ENCODE measurements at regions of chr17 and their contacts with region 1.

Region 1: GRCh38 chr17:21511363-21512198 is 135.4 kb downstream of the KCNJ12 start:
- DNase-seq: peak; percentile 71
- ATAC-seq: peak; percentile 78
- H3K4me3 Mint-ChIP-seq: peak overlapping the region; percentile 66
- H3K27ac Mint-ChIP-seq: no peak overlapping the region
- H3K4me1 Mint-ChIP-seq: peaks cover 9% of the 10 kb centered on the region
- H3K27me3 Mint-ChIP-seq: peaks cover 29% of the 10 kb centered on the region
- CTCF ChIP-seq: peak; percentile 75

Region 2: DNA sequence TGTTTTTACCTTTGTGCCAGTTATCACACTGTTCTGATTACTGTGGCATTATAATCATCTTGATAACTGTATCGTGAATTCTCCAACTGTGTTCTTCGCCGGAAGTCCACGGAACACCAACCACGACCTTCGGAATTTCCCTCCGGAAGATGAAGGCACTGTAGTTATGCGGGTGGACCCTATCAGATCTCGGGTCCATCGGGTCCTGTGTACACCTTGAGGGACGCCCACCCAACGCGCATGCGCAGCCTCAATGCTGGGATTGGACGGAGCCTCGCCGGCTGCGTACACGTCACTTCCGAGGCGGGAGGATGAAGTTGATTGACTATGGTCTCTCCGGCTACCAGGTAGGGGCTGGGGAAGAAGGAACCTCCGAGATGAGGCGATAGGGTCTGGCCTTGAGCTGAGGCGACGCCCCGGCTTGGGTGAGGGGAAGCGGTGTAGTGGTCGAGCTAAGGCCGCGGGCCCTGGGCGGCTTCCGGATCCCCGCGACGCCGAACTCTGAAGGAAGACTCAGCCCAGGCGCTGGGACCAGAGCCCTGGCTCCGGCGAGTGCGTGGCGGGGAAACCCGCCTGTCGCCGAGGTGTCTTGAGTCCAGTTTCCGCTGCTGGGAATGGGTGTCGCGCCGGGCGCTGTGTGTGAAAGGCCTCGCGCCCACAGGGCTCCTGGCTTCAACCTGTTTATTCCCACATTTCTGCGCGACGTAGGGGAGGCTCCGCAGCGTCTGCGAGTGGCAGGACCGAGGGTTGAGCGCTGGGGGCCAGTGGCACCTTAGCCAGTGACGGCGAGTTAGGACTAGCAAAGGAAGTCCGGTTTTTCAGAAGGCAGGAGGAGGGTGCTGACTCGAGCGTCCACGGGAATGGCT is 384.7 kb before region 1 on chr17 and contains the start of gene DHRS7B:
- CTCF ChIA-PET with region 1: interaction called, 8 read pairs
- POLR2A ChIA-PET with region 1: no interaction called
- intact Hi-C with region 1: loop called (anchors 10 kb)
- DNase-seq: peak; percentile 98
- ATAC-seq: peak; percentile 94
- H3K4me3 Mint-ChIP-seq: peak within 1 kb of the TSS; percentile 96
- H3K27ac Mint-ChIP-seq: peak within 1 kb of the TSS; percentile 98
- H3K4me1 Mint-ChIP-seq: peaks cover 27% of the 10 kb centered on the region
- H3K27me3 Mint-ChIP-seq: no peaks in the 10 kb centered on the region
- CTCF ChIP-seq: no peak
- total RNA-seq, gene DHRS7B: 13.5 to 15.3 TPM

Region 3: DNA sequence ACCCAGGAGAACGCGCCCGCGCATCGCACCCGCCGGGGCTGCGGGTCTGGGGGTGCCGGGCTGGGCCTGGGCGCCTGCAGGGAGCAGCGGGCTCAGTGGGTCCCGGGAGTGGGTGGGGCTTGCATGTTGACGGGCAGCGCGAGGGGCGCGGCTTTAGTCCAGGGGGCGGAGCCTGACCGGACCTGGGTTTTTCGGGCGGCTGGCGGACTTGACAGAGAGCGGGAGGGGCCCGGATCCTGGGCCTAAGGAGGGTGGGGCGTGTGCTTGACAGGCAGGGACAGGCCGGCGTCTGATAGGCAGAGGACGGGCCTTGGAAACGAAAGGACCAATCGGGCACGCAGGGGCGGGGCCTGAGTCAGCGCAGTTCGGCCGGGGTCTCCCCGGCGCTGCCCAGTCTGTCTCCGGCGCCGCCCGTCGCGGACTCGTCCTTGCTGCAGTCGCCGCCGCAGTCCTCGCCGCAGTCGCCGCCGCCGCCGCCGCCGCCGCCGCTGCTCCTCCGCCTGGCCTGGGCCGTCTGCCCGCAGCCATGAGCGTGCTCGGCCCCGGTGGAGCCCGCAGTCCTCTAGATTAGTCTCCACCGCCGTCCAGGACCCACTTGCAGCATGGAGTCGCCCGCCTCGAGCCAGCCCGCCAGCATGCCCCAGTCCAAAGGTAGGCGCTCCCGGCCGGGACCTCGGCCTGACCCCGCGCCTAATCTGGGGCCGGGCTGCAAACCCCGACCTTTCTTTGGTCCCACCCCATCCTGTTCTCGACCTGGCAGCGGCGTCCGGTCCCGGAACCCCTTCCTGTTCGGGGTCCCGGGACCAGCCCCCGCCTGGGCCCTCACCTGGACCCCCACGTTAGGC is 227.0 kb before region 1 on chr17 and contains the start of gene MAP2K3:
- CTCF ChIA-PET with region 1: interaction called, 27 read pairs
- POLR2A ChIA-PET with region 1: interaction called, 3 read pairs
- intact Hi-C with region 1: loop called (anchors 5 kb)
- DNase-seq: peak; percentile 99
- ATAC-seq: peak; percentile 78
- H3K4me3 Mint-ChIP-seq: peak within 1 kb of the TSS; percentile 99
- H3K27ac Mint-ChIP-seq: peak within 1 kb of the TSS; percentile 95
- H3K4me1 Mint-ChIP-seq: peaks cover 48% of the 10 kb centered on the region
- H3K27me3 Mint-ChIP-seq: no peaks in the 10 kb centered on the region
- CTCF ChIP-seq: no peak
- total RNA-seq, gene MAP2K3: 151 to 153 TPM

Region 4: GRCh38 chr17:21358707-21359482 is 152.7 kb before region 1 on chr17:
- CTCF ChIA-PET with region 1: no interaction called
- POLR2A ChIA-PET with region 1: no interaction called
- intact Hi-C with region 1: no loop called
- DNase-seq: no peak
- ATAC-seq: no peak
- H3K4me3 Mint-ChIP-seq: no peak overlapping the region
- H3K27ac Mint-ChIP-seq: no peak overlapping the region
- H3K4me1 Mint-ChIP-seq: no peaks in the 10 kb centered on the region
- H3K27me3 Mint-ChIP-seq: no peaks in the 10 kb centered on the region
- CTCF ChIP-seq: no peak

Region 5: GRCh38 chr17:21457051-21458026 is 54.2 kb before region 1 on chr17:
- CTCF ChIA-PET with region 1: interaction called, 62 read pairs
- POLR2A ChIA-PET with region 1: interaction called, 3 read pairs
- intact Hi-C with region 1: loop called (anchors 5 kb)
- DNase-seq: peak; percentile 94
- ATAC-seq: peak; percentile 96
- H3K4me3 Mint-ChIP-seq: peak overlapping the region; percentile 38
- H3K27ac Mint-ChIP-seq: peak overlapping the region; percentile 80
- H3K4me1 Mint-ChIP-seq: peaks cover 27% of the 10 kb centered on the region
- H3K27me3 Mint-ChIP-seq: peaks cover 12% of the 10 kb centered on the region
- CTCF ChIP-seq: peak; percentile 87

Region 6: GRCh38 chr17:21564262-21564661 is 52.7 kb after region 1 on chr17:
- CTCF ChIA-PET with region 1: no interaction called
- POLR2A ChIA-PET with region 1: no interaction called
- intact Hi-C with region 1: no loop called
- DNase-seq: no peak
- ATAC-seq: no peak
- H3K4me3 Mint-ChIP-seq: no peak overlapping the region
- H3K27ac Mint-ChIP-seq: no peak overlapping the region
- H3K4me1 Mint-ChIP-seq: no peaks in the 10 kb centered on the region
- H3K27me3 Mint-ChIP-seq: peaks cover 20% of the 10 kb centered on the region
- CTCF ChIP-seq: no peak